Esophagus muscularis mucosa (tissue), 4 donors: ENCODE measurements at regions of chr2 and their contacts with region 1.

Region 1: DNA sequence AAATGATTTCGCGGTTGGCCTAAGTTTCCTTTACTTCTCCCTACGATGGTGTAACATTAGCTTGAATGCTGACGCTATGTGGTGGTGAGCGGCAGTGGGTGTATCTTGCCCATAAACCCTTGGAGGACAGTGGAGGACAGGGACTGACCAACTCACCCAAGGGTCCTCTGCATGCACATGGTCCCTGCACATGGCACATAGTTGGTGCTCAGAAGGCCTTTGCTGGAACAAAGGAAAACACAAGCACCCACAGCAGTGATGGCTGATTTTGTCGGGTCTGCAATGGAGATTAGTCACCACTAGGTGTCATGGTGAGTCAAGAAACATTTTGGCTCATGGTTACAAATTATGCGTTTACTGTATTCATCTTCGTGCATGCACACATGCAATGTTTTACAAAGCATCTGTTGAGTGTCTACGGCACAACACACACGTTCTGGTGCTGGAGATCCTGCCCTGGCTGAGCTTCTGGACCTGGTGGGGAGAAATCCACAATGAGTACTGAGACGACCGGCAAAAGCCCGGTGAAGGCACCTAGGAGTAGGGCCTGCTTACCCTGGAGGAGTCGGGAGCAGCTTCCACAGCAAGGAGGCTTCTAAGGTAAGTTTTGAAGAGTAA is 44.0 kb downstream of the PDCL3 start:
- DNase-seq: no peak
- H3K4me3 ChIP-seq: no peak overlapping the region
- H3K27ac ChIP-seq: no peak overlapping the region
- H3K4me1 ChIP-seq: peaks cover 14 to 29% (median 20%) of the 10 kb centered on the region in 4 donors
- H3K27me3 ChIP-seq: no peaks in the 10 kb centered on the region
- CTCF ChIP-seq: peak; percentile 75 to 85 (median 77)
- EP300 ChIP-seq: no peak
- POLR2A ChIP-seq: no peak

Region 2: DNA sequence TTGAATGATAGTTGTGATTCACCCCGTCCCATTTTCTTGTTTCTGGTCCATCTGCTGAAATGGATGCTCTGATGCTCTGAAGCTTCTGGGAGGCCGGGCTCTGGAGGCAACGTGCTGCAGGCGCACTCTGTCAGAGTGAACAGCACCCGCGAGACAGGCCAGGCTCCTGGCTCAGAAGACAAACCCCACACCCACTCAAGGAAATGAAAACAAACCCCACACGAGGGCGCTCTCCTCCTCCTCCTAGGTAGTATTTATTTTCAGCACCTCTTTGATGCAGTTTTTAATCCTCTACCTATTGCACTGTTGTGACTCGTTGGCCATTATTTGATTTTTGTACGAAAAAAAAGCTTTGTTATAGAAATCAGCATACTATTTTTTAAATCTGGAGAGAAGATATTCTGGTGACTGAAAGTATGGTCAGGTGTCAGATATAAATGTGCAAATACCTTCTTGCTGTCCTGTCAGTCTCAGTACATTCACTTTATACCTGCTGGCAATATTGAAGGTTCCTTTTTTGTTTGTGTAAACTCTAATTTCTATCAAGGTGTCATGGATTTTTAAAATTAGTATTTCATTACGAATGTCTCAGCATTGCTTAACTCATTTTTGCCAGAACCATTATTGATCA is 179.1 kb before region 1 on chr2:
- intact Hi-C with region 1: loop called (anchors 5 kb)
- DNase-seq: peak; percentile 90
- H3K4me3 ChIP-seq: no peak overlapping the region
- H3K27ac ChIP-seq: no peak overlapping the region
- H3K4me1 ChIP-seq: peaks cover 0 to 17% (median 16%) of the 10 kb centered on the region in 4 donors
- H3K27me3 ChIP-seq: no peaks in the 10 kb centered on the region
- CTCF ChIP-seq: peak; percentile 45 to 54 (median 47)
- EP300 ChIP-seq: no peak
- POLR2A ChIP-seq: no peak

Region 3: DNA sequence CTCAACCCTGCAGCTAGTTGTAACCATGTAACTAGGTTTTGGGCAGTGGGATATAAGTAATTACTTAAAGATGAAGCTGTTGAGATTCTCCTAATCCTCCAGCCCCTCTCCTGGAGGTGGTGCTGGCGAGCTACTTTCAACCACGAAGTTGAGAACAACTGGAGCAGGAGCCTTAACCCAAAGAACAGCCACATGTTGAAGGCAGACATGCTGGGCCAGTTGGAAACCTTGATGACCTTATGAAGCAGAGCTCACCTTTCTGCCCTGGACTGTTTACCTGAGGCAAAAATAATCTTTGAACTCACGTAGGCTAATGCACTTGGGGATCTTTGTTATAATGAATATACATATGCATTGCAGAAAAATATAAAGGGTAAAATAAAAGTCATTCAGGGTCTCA is 123.5 kb after region 1 on chr2:
- intact Hi-C with region 1: loop called (anchors 10 kb)
- DNase-seq: no peak
- H3K4me3 ChIP-seq: no peak overlapping the region
- H3K27ac ChIP-seq: no peak overlapping the region
- H3K4me1 ChIP-seq: peaks cover 10 to 11% (median 10%) of the 10 kb centered on the region in 4 donors
- H3K27me3 ChIP-seq: no peaks in the 10 kb centered on the region
- CTCF ChIP-seq: peak; percentile 55 to 64 (median 62)
- EP300 ChIP-seq: no peak
- POLR2A ChIP-seq: no peak

Region 4: GRCh38 chr2:100832885-100833284 is 226.1 kb after region 1 on chr2:
- intact Hi-C with region 1: loop called (anchors 5 kb)
- DNase-seq: no peak
- H3K4me3 ChIP-seq: no peak overlapping the region
- H3K27ac ChIP-seq: peak overlapping the region; percentile 3 to 30 (median 14)
- H3K4me1 ChIP-seq: peaks cover 24 to 42% (median 28%) of the 10 kb centered on the region in 4 donors
- H3K27me3 ChIP-seq: no peaks in the 10 kb centered on the region
- CTCF ChIP-seq: no peak
- EP300 ChIP-seq: no peak
- POLR2A ChIP-seq: no peak

Region 5: DNA sequence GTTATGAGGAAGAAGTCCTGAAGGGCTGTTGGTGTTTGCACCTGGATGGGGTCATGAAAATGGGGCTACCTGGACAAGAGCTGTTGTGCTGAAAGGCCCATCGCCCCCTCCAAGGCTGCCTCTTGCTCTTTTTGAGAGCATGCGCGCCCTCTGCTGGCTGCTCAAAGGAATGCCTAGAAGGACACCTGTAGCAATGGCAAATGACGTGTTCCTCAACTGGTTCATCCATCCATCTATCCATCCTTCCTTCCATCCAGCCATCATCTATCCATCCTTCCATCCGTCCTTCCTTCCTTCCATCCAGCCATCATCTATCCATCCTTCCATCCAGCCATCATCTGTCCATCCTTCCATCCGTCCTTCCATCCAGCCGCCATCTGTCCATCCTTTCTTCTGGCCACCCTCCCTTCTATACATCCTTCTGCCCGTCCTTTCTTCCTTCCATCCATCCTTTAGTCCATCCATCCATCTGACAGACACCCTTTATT is 378.1 kb after region 1 on chr2:
- intact Hi-C with region 1: loop called (anchors 2 kb)
- DNase-seq: no peak
- H3K4me3 ChIP-seq: no peak overlapping the region
- H3K27ac ChIP-seq: no peak overlapping the region
- H3K4me1 ChIP-seq: peaks cover 0 to 12% (median 1%) of the 10 kb centered on the region in 4 donors
- H3K27me3 ChIP-seq: no peaks in the 10 kb centered on the region
- CTCF ChIP-seq: peak; percentile 82 to 90 (median 87)
- EP300 ChIP-seq: no peak
- POLR2A ChIP-seq: no peak